ENCODE measurements at regions of chr16 and their contacts with region 1.

Region 1: DNA sequence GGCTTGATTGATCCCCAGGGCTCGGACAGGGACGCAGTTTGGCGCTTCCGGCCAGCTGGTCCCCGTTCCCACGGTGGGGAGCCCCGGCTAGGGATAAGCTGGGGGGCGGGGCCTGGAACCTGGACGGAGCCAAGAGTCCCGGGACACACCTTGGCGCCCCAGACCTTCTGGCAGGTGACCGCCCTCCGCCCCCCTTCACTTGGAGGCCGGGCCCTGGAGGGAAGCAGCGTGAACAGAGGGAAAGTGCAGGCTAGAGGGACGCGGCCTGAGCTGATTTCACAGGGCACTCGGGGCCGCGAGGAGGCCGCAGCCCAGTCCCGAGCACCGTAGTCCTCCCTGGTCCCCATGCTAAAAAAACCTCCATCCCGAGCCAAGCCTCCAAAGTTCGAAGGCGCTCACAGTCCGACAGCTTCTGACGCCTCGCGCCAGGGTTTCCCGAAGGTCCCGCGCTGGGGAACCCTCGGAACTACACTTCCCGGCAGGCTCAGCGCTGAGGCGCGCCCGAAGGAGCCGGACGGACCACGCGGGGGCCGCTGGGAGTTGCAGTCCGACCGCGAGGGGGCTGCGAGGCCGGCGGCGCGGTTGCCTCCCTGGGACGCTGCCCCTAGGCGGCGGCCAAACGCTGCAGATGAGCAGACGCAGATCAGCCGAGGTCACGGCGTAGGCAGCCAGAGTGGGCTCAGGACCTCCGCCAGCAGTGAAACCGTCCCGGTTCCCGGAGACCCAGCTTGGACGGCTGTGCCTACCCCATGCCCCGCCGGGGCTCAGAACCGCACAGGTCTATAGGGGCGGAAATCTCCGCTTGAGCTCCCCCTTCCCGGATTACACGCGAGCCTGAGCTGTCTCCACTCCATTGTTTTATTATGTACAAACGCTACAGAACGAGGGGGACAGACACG is at the start of gene TBX6:
- DNase-seq: peak; percentile 90 to 93 (median 91)
- H3K4me3 ChIP-seq: peak within 1 kb of the TSS in 1 of 2 donors; percentile 72
- H3K4me3 Mint-ChIP-seq: peak within 1 kb of the TSS; percentile 87 to 95 (median 90)
- H3K27ac ChIP-seq: peak within 1 kb of the TSS; percentile 75
- H3K27ac Mint-ChIP-seq: peak within 1 kb of the TSS; percentile 84 to 98 (median 95)
- H3K4me1 ChIP-seq: peaks cover 60% of the 10 kb centered on the region
- H3K4me1 Mint-ChIP-seq: peaks cover 27 to 65% (median 42%) of the 10 kb centered on the region in 4 donors
- H3K27me3 ChIP-seq: no peaks in the 10 kb centered on the region
- H3K27me3 Mint-ChIP-seq: no peaks in the 10 kb centered on the region
- total RNA-seq, gene TBX6: 1.3 to 1.4 TPM

Region 2: DNA sequence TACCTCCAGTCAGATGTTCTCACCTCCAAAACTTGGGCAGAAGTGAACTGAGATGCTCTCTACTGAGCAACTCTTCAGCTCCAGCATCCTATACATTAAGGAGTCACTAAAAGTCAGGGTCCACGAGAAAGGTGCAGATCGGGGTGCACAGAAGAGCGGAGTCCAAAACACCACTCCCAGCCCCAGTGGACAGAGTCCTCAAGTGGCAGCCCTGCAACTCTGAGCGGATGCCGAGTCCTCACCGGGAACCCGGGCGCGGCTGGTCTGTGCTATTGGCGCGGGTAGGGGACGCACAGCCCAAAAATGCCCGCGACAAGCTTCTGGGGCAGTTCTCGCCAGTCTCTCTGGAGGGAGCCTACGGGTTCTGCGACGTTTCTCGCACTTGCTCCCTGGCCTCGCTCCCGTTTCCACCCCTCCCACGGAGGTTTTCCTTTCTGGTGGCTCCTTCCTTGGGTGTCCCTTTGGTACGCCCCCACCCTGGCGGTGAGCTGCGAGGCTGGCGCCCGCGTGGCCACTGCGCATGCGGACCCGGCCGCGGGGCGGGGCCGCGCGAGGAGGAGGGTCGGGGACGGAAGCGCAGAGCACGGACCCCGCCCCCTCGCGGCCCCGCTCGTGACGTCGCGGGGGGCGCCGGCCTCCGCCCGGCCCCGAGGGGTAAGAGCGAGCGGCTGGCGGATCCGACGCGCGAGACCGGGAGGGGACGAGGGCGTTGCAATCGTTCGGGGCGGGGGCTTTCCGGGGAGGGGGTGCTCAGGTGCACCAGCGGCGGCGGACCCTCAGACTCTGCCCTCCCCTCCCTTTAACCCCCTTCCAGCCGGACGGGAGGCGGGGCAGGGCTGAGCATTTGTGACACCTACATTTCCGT is 130.0 kb before region 1 on chr16 and contains the start of gene TMEM219:
- CTCF ChIA-PET with region 1: no interaction called
- POLR2A ChIA-PET with region 1: no interaction called
- intact Hi-C with region 1: no loop called
- DNase-seq: peak; percentile 92 to 98 (median 95)
- H3K4me3 ChIP-seq: peak within 1 kb of the TSS; percentile 75 to 89
- H3K4me3 Mint-ChIP-seq: peak within 1 kb of the TSS; percentile 88 to 95 (median 92)
- H3K27ac ChIP-seq: peak within 1 kb of the TSS; percentile 87
- H3K27ac Mint-ChIP-seq: peak within 1 kb of the TSS; percentile 92 to 99 (median 96)
- H3K4me1 ChIP-seq: peaks cover 19% of the 10 kb centered on the region
- H3K4me1 Mint-ChIP-seq: peaks cover 11 to 30% (median 20%) of the 10 kb centered on the region in 4 donors
- H3K27me3 ChIP-seq: no peaks in the 10 kb centered on the region
- H3K27me3 Mint-ChIP-seq: no peaks in the 10 kb centered on the region
- total RNA-seq, gene TMEM219: 80.8 to 103 TPM

Region 3: GRCh38 chr16:30065143-30065850 is 26.4 kb before region 1 on chr16 and contains the start of gene ALDOA:
- CTCF ChIA-PET with region 1: interaction called, 48 read pairs
- POLR2A ChIA-PET with region 1: interaction called, 404 read pairs
- intact Hi-C with region 1: loop called (anchors 1 kb)
- DNase-seq: peak; percentile 94 to 96 (median 94)
- H3K4me3 ChIP-seq: peak within 1 kb of the TSS; percentile 77 to 93
- H3K4me3 Mint-ChIP-seq: peak within 1 kb of the TSS; percentile 98 to 100 (median 99)
- H3K27ac ChIP-seq: peak within 1 kb of the TSS; percentile 94
- H3K27ac Mint-ChIP-seq: peak within 1 kb of the TSS; percentile 95 to 100 (median 97)
- H3K4me1 ChIP-seq: peaks cover 47% of the 10 kb centered on the region
- H3K4me1 Mint-ChIP-seq: peaks cover 17 to 58% (median 33%) of the 10 kb centered on the region in 4 donors
- H3K27me3 ChIP-seq: no peaks in the 10 kb centered on the region
- H3K27me3 Mint-ChIP-seq: no peaks in the 10 kb centered on the region
- total RNA-seq, gene ALDOA: 558 to 563 TPM

Region 4: GRCh38 chr16:30104494-30104968 is 12.8 kb after region 1 on chr16:
- CTCF ChIA-PET with region 1: interaction called, 20 read pairs
- POLR2A ChIA-PET with region 1: interaction called, 23 read pairs
- intact Hi-C with region 1: no loop called
- DNase-seq: no peak
- H3K4me3 ChIP-seq: no peak overlapping the region
- H3K4me3 Mint-ChIP-seq: no peak overlapping the region
- H3K27ac ChIP-seq: no peak overlapping the region
- H3K27ac Mint-ChIP-seq: peak overlapping the region in 1 of 7 donors; percentile 60
- H3K4me1 ChIP-seq: no peaks in the 10 kb centered on the region
- H3K4me1 Mint-ChIP-seq: peaks cover 0 to 1% (median 0%) of the 10 kb centered on the region in 4 donors
- H3K27me3 ChIP-seq: no peaks in the 10 kb centered on the region
- H3K27me3 Mint-ChIP-seq: no peaks in the 10 kb centered on the region

Region 5: GRCh38 chr16:30122604-30123160 is 31.0 kb after region 1 on chr16:
- CTCF ChIA-PET with region 1: interaction called, 8 read pairs
- POLR2A ChIA-PET with region 1: interaction called, 18 read pairs
- intact Hi-C with region 1: loop called (anchors 2 kb)
- DNase-seq: peak in 1 of 5 donors; percentile 54
- H3K4me3 ChIP-seq: peak overlapping the region; percentile 52 to 82
- H3K4me3 Mint-ChIP-seq: peak overlapping the region; percentile 86 to 92 (median 90)
- H3K27ac ChIP-seq: peak overlapping the region; percentile 70
- H3K27ac Mint-ChIP-seq: peak overlapping the region; percentile 81 to 93 (median 88)
- H3K4me1 ChIP-seq: peaks cover 25% of the 10 kb centered on the region
- H3K4me1 Mint-ChIP-seq: peaks cover 8 to 38% (median 20%) of the 10 kb centered on the region in 4 donors
- H3K27me3 ChIP-seq: no peaks in the 10 kb centered on the region
- H3K27me3 Mint-ChIP-seq: no peaks in the 10 kb centered on the region

Region 6: DNA sequence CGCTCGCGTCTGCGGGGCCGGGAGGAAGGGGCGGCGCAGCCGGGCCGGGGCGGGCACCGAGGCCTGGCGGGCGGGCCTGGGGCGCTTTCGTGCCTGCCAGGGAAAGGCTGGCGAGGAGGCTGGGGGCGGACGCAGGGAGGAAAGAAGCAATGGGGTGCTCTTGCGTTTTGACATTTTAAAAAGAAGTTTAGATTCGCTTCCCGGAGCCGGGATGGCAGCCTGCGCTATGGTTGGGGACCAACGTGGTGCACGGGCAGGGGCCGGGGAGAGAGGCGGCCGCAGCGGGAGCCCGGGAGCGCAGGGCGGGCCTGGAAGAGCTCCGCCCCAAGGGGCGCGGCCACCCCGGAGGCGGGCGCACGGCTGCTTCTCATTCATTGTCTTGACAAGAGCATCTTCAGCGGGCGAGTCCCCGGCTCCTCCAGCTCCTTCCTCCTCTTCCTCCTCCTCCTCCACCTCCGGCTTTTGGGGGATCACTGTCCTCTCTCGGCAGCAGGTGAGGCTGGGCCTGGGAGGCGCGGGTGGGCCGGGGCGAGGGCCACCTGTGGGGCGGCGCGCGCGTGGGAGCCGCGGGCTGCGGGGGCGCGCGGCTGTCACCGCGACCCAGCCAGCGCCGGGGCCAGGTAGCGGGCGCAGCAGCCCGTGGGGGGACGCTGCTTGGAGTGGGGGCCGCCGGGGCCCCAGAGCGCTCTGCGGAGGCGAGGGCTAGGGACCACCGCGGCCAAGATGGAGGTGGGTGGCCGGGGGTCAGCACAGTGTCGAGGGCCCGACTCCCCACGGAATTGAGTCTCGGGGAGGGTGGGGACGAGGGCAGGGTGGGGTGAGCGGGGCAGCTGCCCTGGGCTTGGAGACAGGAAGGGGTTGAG is 91.7 kb after region 1 on chr16 and contains the start of gene CORO1A:
- CTCF ChIA-PET with region 1: interaction called, 59 read pairs
- POLR2A ChIA-PET with region 1: interaction called, 292 read pairs
- intact Hi-C with region 1: no loop called
- DNase-seq: peak; percentile 80 to 87 (median 84)
- H3K4me3 ChIP-seq: peak within 1 kb of the TSS; percentile 91 to 93
- H3K4me3 Mint-ChIP-seq: peak within 1 kb of the TSS; percentile 94 to 99 (median 98)
- H3K27ac ChIP-seq: peak within 1 kb of the TSS; percentile 77
- H3K27ac Mint-ChIP-seq: peak within 1 kb of the TSS; percentile 96 to 99 (median 97)
- H3K4me1 ChIP-seq: peaks cover 40% of the 10 kb centered on the region
- H3K4me1 Mint-ChIP-seq: peaks cover 15 to 59% (median 29%) of the 10 kb centered on the region in 4 donors
- H3K27me3 ChIP-seq: no peaks in the 10 kb centered on the region
- H3K27me3 Mint-ChIP-seq: no peaks in the 10 kb centered on the region
- total RNA-seq, gene CORO1A: 745 to 769 TPM